ENCODE measurements at regions of chr2 and their contacts with region 1.

Region 1: DNA sequence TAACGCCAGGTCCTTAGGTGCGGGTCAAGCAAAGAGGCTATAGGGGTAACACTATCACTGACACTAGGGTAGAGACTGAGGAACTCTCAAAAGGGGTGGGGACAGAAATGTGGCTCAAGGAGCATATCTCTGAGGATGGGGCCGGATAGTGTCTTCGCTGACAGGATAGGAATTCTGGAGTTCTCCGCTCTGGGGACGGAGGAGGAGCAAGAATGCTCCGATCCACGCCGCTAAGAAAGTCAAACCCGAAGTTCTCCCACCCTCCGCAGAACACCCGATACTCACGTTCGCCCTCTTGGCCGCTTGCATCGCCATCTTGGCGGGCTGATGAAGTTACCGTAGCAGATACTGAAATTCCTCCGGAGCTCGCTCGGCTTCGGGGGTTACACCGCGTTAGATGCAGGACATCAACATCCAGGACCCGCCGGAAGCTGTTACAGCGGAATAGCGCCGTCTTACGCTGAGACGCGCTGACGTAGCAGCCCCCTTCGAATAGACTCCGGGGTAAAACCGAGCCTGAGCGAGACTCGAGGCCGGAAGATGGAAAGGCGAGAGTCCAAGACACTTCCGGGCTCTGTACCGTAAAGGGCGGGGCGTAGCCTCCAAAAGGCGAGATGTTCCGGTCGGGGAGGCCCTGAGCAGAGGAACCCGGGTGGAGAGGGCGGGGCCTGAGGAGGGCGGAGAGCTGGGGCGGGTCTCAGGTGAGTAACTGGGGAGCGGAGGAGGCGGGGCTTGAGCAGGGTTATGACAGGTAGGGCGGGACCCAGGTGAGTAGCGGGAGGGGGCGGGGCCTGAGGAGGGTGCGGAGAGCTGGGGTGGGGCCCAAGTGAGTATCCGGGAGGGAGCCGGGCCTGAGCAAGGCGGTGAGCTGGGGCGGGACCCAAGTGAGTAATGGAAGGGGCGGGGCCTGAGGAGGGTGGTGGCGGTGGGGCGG is at the start of gene SF3B6:
- DNase-seq: peak; percentile 98 to 100 (median 100)
- ATAC-seq: peak; percentile 81
- H3K4me3 ChIP-seq: peak within 1 kb of the TSS; percentile 93
- H3K4me3 Mint-ChIP-seq: peak within 1 kb of the TSS; percentile 97
- H3K27ac ChIP-seq: peak within 1 kb of the TSS; percentile 86 to 95
- H3K27ac Mint-ChIP-seq: peak within 1 kb of the TSS; percentile 98
- H3K4me1 ChIP-seq: peaks cover 27% of the 10 kb centered on the region
- H3K4me1 Mint-ChIP-seq: peaks cover 41% of the 10 kb centered on the region
- H3K27me3 ChIP-seq: no peaks in the 10 kb centered on the region
- H3K27me3 Mint-ChIP-seq: no peaks in the 10 kb centered on the region
- CTCF ChIP-seq: no peak
- total RNA-seq, gene SF3B6: 59.8 to 62.6 TPM

Region 2: DNA sequence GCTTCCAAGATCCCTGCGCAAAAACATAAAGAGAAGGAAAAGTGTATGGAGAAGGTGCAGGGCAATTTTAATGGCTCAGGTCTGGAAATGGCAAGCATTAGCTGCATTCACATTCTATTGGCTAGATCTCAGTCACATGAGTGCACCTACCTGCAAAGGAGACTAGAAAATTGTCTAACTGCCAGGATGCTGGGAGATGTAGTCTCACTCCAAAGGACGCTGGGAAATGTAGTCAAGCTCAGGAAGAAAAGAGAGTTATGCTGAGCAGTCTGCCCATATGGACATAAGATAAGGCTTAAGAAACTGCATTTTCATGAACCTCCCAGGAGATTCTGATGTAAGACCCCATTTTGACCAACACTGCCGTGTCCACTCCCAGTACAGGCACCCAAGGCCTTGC is 700.7 kb before region 1 on chr2:
- CTCF ChIA-PET with region 1: no interaction called
- POLR2A ChIA-PET with region 1: no interaction called
- intact Hi-C with region 1: no loop called
- DNase-seq: peak in 2 of 14 experiments; percentile 27 to 37
- ATAC-seq: peak; percentile 57
- H3K4me3 ChIP-seq: no peak overlapping the region
- H3K4me3 Mint-ChIP-seq: no peak overlapping the region
- H3K27ac ChIP-seq: no peak overlapping the region
- H3K27ac Mint-ChIP-seq: no peak overlapping the region
- H3K4me1 ChIP-seq: no peaks in the 10 kb centered on the region
- H3K4me1 Mint-ChIP-seq: peaks cover 4% of the 10 kb centered on the region
- H3K27me3 ChIP-seq: peaks cover 0 to 7% of the 10 kb centered on the region in 2 experiments
- H3K27me3 Mint-ChIP-seq: peaks cover 15% of the 10 kb centered on the region
- CTCF ChIP-seq: no peak

Region 3: GRCh38 chr2:24046930-24047702 is 29.1 kb before region 1 on chr2 and contains the start of gene WDCP:
- CTCF ChIA-PET with region 1: interaction called, 3 read pairs
- POLR2A ChIA-PET with region 1: interaction called, 77 read pairs
- intact Hi-C with region 1: loop called (anchors 1 kb)
- DNase-seq: peak; percentile 82 to 98 (median 88)
- ATAC-seq: peak; percentile 99
- H3K4me3 ChIP-seq: peak within 1 kb of the TSS; percentile 83
- H3K4me3 Mint-ChIP-seq: peak within 1 kb of the TSS; percentile 94
- H3K27ac ChIP-seq: peak within 1 kb of the TSS in 1 of 2 donors; percentile 22
- H3K27ac Mint-ChIP-seq: peak within 1 kb of the TSS; percentile 79
- H3K4me1 ChIP-seq: peaks cover 30% of the 10 kb centered on the region
- H3K4me1 Mint-ChIP-seq: peaks cover 36% of the 10 kb centered on the region
- H3K27me3 ChIP-seq: peaks cover 10 to 21% of the 10 kb centered on the region in 2 experiments
- H3K27me3 Mint-ChIP-seq: peaks cover 10% of the 10 kb centered on the region
- CTCF ChIP-seq: no peak
- total RNA-seq, gene WDCP: 1.4 to 2.0 TPM

Region 4: GRCh38 chr2:24123195-24123921 is 47.2 kb after region 1 on chr2 and contains the starts of genes FAM228B and PFN4:
- CTCF ChIA-PET with region 1: no interaction called
- POLR2A ChIA-PET with region 1: interaction called, 11 read pairs
- intact Hi-C with region 1: no loop called
- DNase-seq: peak; percentile 18 to 74 (median 48)
- ATAC-seq: peak; percentile 84
- H3K4me3 ChIP-seq: peak within 1 kb of the TSS; percentile 57
- H3K4me3 Mint-ChIP-seq: peak within 1 kb of the TSS; percentile 90
- H3K27ac ChIP-seq: no peak within 1 kb of the TSS
- H3K27ac Mint-ChIP-seq: peak within 1 kb of the TSS; percentile 62
- H3K4me1 ChIP-seq: peaks cover 14% of the 10 kb centered on the region
- H3K4me1 Mint-ChIP-seq: peaks cover 15% of the 10 kb centered on the region
- H3K27me3 ChIP-seq: no peaks in the 10 kb centered on the region
- H3K27me3 Mint-ChIP-seq: no peaks in the 10 kb centered on the region
- CTCF ChIP-seq: no peak
- total RNA-seq, gene FAM228B: 21.6 to 24.2 TPM
- total RNA-seq, gene PFN4: not detected

Region 5: DNA sequence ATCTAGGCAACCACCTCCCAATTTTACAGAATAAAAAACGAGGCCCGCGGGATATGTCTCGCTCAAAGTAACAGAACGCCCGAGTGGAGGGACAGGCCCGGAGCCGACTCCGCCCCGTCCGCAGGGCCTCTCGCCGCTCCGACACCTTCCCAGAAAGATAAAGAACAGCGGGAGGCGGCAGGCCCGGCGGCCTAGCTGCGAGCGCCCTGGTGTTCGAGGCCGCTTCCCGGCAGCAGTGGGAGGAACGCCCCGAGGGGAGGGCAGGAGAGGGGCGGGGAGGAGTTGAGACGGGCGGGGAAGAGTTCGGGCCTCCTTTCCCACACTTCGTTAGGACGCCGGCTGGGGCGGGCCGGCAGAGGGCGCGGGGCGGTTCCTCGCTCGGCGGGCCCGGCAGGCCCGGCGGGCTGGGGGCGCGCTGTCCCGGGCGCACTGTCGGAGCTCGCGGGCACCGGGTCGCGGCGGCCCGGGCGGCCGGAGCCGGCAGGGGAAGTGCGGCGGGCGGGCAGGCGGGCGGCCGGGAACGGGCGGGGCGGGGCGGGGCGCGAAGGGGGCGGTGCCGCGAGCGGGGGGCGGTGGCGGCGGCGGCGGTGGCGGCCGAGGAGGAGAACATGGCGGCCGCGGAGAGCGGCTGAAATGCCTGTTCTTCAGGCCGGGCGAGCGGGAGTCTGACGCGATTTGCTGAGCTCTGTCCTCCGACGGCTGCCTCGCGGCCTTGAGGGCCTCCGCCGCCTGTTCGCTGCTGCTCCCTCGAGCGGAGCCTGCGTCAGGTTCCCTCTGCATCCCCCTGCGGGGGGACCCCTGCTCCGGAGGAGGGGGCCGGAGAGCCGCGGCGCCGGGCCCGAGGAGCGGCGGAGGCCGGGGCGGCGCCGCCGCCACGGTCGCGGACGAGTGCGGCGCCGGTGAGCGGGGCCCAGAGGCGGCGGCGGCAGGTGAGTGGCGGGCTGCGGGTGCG is 414.8 kb after region 1 on chr2 and contains the start of gene NCOA1:
- CTCF ChIA-PET with region 1: no interaction called
- POLR2A ChIA-PET with region 1: interaction called, 3 read pairs
- intact Hi-C with region 1: loop called in 1 of 2 experiments (anchors 10 kb)
- DNase-seq: peak; percentile 83 to 95 (median 88)
- ATAC-seq: peak; percentile 85
- H3K4me3 ChIP-seq: peak within 1 kb of the TSS; percentile 60
- H3K4me3 Mint-ChIP-seq: peak within 1 kb of the TSS; percentile 92
- H3K27ac ChIP-seq: peak within 1 kb of the TSS; percentile 76 to 81
- H3K27ac Mint-ChIP-seq: peak within 1 kb of the TSS; percentile 94
- H3K4me1 ChIP-seq: peaks cover 34% of the 10 kb centered on the region
- H3K4me1 Mint-ChIP-seq: peaks cover 66% of the 10 kb centered on the region
- H3K27me3 ChIP-seq: no peaks in the 10 kb centered on the region
- H3K27me3 Mint-ChIP-seq: no peaks in the 10 kb centered on the region
- CTCF ChIP-seq: no peak
- total RNA-seq, gene NCOA1: 35.5 to 40.6 TPM